ENCODE measurements at regions of chr11 and their contacts with region 1.

Region 1: DNA sequence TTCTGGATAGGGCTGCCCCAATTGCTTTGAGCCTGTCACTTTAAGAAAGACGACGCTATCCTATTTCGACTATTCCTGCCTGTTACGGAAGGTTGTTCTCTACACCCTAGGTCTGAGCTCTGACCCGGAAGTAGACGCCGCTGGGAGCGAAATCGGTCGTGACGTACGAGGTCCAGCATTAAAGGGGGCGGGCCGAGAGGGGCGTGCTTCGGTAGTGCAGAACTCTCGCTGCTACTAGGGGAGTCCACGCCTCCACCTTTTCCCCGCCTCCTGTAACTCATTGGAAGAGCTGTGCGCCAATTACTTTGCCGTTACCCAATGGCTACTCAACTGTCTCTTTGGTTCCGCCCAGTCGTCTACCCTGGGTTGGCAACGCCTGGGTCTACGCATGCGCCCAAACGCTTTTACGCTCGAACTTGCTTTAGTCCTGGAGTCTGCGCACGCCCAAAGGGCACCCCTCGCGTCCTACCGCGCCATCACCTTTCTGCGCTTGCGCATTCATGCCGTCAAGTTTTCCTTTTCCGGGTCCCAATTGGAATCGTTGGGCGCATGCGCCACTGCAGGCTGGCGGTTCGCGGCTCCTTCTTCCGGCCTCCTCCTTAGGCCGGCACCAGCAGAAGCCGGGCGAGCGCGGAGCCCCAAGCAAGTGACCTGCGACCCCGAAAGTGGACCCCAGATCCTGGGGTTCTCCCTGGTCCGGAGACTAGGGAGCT is at the start of gene PCNX3:
- DNase-seq: peak; percentile 100
- CTCF ChIP-seq: no peak

Region 2: DNA sequence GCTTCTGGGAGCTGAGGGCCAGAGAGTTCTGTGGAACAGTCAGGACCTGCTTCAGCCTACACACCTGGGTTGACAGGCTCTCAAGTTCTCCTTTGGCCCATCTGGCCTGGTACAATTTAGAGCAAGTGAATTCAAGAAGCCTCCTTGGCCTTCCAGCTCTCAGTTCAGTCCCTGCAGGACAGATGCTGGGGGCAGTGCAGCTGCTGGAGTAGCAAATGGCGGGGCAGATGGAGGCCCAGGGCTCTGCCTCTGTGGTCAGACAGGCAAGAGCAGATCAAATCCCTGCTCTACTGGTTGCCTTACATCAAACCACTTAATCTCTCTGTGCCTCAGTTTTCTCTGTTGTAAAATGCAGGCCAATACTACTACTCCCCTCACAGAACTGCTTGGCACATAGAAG is 11.1 kb before region 1 on chr11:
- CTCF ChIA-PET with region 1: interaction called, 12 read pairs
- POLR2A ChIA-PET with region 1: no interaction called
- DNase-seq: no peak
- CTCF ChIP-seq: no peak